HEK293 (cell line): ENCODE measurements at regions of chr10 and their contacts with region 1.

Region 1: GRCh38 chr10:90920986-90921666 is at the start of gene ANKRD1:
- H3K4me3 ChIP-seq: peak within 1 kb of the TSS; percentile 37
- H3K27ac ChIP-seq: no peak within 1 kb of the TSS
- H3K4me1 ChIP-seq: peaks cover 6% of the 10 kb centered on the region; the same call in 1 of the 2 replicates
- CTCF ChIP-seq: no peak

Region 2: GRCh38 chr10:90530521-90530920 is 390.6 kb before region 1 on chr10:
- CTCF ChIA-PET with region 1: no interaction called
- POLR2A ChIA-PET with region 1: no interaction called
- H3K4me3 ChIP-seq: no peak overlapping the region
- H3K27ac ChIP-seq: no peak overlapping the region
- H3K4me1 ChIP-seq: no peaks in the 10 kb centered on the region
- CTCF ChIP-seq: no peak

Region 3: GRCh38 chr10:90969947-90970684 is 49.0 kb after region 1 on chr10:
- CTCF ChIA-PET with region 1: interaction called, 16 read pairs
- POLR2A ChIA-PET with region 1: interaction called, 8 read pairs
- H3K4me3 ChIP-seq: no peak overlapping the region
- H3K27ac ChIP-seq: no peak overlapping the region
- H3K4me1 ChIP-seq: peaks cover 8% of the 10 kb centered on the region; the same call in 1 of the 2 replicates
- CTCF ChIP-seq: no peak